Calu3 (cell line): ENCODE measurements at regions of chr5 and their contacts with region 1.

Region 1: DNA sequence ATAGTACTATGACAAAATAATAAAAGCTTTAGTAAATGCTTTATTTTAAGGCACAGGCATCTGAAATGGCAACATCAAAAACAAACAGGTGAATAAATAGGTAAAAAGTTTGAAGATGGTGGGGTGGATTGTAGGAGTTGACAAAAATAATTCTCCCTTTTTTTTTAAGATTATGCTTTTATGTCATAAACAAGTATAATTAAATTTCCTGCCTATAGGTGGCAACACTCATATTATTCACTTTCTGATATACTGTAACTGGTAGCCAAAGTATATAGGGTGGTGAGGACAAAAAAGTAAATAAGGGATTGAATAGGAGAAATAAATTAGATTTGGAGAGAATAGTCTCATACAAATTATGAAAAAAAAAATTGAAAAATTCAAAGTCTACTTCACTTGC is 120.0 kb upstream of the ACOT12 start:
- DNase-seq: no peak
- H3K4me3 Mint-ChIP-seq: no peak overlapping the region
- H3K27ac Mint-ChIP-seq: no peak overlapping the region
- H3K4me1 Mint-ChIP-seq: no peaks in the 10 kb centered on the region
- H3K27me3 Mint-ChIP-seq: no peaks in the 10 kb centered on the region
- CTCF ChIP-seq: no peak

Region 2: DNA sequence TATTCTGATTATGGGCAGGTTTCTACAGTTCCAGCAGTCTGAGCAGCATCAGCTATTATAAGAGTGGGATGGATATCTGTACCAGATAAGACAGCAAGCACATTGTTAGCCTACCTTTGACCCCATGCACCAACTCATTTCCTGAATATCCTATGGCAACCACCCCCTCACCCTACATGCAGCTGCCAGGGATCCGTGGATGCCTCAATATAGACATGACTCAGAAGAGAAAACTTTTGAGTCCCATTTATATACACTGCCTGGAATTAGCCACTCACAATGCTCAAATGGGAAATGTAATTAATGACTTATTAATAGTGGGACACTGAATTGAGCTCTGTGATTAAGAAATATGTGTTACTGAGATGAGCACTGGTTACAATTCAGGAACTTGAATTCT is 112.5 kb after region 1 on chr5:
- CTCF ChIA-PET with region 1: interaction called, 3 read pairs
- intact Hi-C with region 1: loop called (anchors 5 kb)
- DNase-seq: peak; percentile 74
- H3K4me3 Mint-ChIP-seq: peak overlapping the region; percentile 18
- H3K27ac Mint-ChIP-seq: peak overlapping the region; percentile 55
- H3K4me1 Mint-ChIP-seq: peaks cover 25% of the 10 kb centered on the region
- H3K27me3 Mint-ChIP-seq: no peaks in the 10 kb centered on the region
- CTCF ChIP-seq: no peak

Region 3: GRCh38 chr5:81696418-81697397 is 182.7 kb after region 1 on chr5:
- CTCF ChIA-PET with region 1: no interaction called
- intact Hi-C with region 1: no loop called
- DNase-seq: no peak
- H3K4me3 Mint-ChIP-seq: no peak overlapping the region
- H3K27ac Mint-ChIP-seq: no peak overlapping the region
- H3K4me1 Mint-ChIP-seq: no peaks in the 10 kb centered on the region
- H3K27me3 Mint-ChIP-seq: no peaks in the 10 kb centered on the region
- CTCF ChIP-seq: no peak